ENCODE measurements at regions of chr17 and their contacts with region 1.

Region 1: GRCh38 chr17:37609170-37610040 is at the start of gene SYNRG:
- DNase-seq: peak; percentile 98 to 99
- ATAC-seq: peak; percentile 100
- H3K4me3 ChIP-seq: peak within 1 kb of the TSS; percentile 67 to 92
- H3K27ac ChIP-seq: peak within 1 kb of the TSS; percentile 58 to 61
- H3K4me1 ChIP-seq: no peaks in the 10 kb centered on the region
- H3K27me3 ChIP-seq: no peaks in the 10 kb centered on the region
- total RNA-seq, gene SYNRG: 29.8 to 43.5 TPM

Region 2: DNA sequence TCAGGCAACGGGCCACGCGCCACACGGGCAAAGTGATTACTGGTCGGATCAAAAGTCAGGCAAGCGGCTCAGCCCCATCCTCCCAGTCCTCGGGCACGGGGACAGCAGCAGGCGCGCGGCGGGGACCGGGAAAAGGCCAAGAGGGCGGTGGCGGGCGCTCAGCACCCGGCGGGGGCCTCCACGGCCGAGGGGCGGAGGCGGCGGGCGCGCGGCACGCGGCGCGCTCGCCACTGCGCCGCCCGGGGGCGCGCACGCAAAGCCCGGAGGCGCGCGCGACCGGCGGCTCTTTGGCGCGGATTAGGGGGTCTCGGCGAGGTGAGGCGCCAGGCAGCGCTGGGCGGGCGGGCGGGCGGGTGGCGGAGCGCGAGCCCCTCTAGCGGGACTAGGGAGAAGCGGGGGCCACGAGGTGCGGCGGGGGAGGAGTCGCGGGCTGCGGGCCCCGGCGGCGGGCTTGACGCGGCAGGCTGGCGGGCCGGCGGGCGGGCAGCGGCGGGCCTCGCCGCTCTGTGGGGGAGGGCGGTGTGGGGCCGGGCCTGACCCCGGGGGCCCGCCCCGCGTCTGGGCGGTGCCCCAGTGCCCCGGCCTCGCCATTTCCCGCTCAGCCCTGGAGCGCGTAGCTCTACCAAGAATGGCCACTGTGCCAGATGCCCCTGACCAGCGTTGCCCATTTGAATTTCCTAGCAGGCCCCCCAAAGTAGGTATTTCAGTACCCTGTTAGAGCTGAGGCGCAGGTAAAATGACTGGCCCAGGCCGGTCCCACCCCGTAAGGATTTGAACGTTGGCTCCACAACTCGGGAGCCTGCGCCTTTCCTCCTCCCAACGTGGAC is 202.6 kb before region 1 on chr17 and contains the starts of genes ACACA and TADA2A:
- intact Hi-C with region 1: loop called in 1 of 2 experiments (anchors 2 kb)
- DNase-seq: peak; percentile 88 to 93
- ATAC-seq: peak; percentile 96
- H3K4me3 ChIP-seq: peak within 1 kb of the TSS; percentile 85 to 96
- H3K27ac ChIP-seq: peak within 1 kb of the TSS; percentile 15 to 54
- H3K4me1 ChIP-seq: no peaks in the 10 kb centered on the region
- H3K27me3 ChIP-seq: no peaks in the 10 kb centered on the region
- total RNA-seq, gene ACACA: 31.6 to 49.9 TPM
- total RNA-seq, gene TADA2A: 23.4 to 25.6 TPM

Region 3: GRCh38 chr17:37489197-37490001 is 120.0 kb before region 1 on chr17 and contains the start of gene DUSP14:
- intact Hi-C with region 1: loop called in 1 of 2 experiments (anchors 2 kb)
- DNase-seq: peak; percentile 77 to 94
- ATAC-seq: peak; percentile 91
- H3K4me3 ChIP-seq: peak within 1 kb of the TSS; percentile 70 to 92
- H3K27ac ChIP-seq: peak within 1 kb of the TSS in 1 of 2 donors; percentile 58
- H3K4me1 ChIP-seq: peaks cover 0 to 2% of the 10 kb centered on the region in 2 donors
- H3K27me3 ChIP-seq: no peaks in the 10 kb centered on the region
- total RNA-seq, gene DUSP14: 9.2 to 9.7 TPM

Region 4: GRCh38 chr17:37643118-37643766 is 33.8 kb after region 1 on chr17 and contains the start of gene DDX52:
- intact Hi-C with region 1: loop called in 1 of 2 experiments (anchors 2 kb)
- DNase-seq: peak; percentile 95 to 97
- ATAC-seq: peak; percentile 97
- H3K4me3 ChIP-seq: peak within 1 kb of the TSS; percentile 31 to 91
- H3K27ac ChIP-seq: peak within 1 kb of the TSS in 1 of 2 donors; percentile 76
- H3K4me1 ChIP-seq: peaks cover 0 to 3% of the 10 kb centered on the region in 2 donors
- H3K27me3 ChIP-seq: no peaks in the 10 kb centered on the region
- total RNA-seq, gene DDX52: 19.7 to 25.2 TPM

Region 5: GRCh38 chr17:37659925-37660324 is 50.5 kb after region 1 on chr17:
- intact Hi-C with region 1: no loop called
- DNase-seq: no peak
- ATAC-seq: no peak
- H3K4me3 ChIP-seq: no peak overlapping the region
- H3K27ac ChIP-seq: no peak overlapping the region
- H3K4me1 ChIP-seq: no peaks in the 10 kb centered on the region
- H3K27me3 ChIP-seq: no peaks in the 10 kb centered on the region